ENCODE measurements at regions of chr3 and their contacts with region 1.

Region 1: GRCh38 chr3:128112357-128112968 is 11.1 kb downstream of the RUVBL1 start:
- DNase-seq: peak; percentile 73
- H3K4me3 Mint-ChIP-seq: peak overlapping the region; percentile 46
- H3K27ac Mint-ChIP-seq: peak overlapping the region; percentile 98
- H3K4me1 Mint-ChIP-seq: peaks cover 51% of the 10 kb centered on the region
- H3K27me3 Mint-ChIP-seq: no peaks in the 10 kb centered on the region

Region 2: DNA sequence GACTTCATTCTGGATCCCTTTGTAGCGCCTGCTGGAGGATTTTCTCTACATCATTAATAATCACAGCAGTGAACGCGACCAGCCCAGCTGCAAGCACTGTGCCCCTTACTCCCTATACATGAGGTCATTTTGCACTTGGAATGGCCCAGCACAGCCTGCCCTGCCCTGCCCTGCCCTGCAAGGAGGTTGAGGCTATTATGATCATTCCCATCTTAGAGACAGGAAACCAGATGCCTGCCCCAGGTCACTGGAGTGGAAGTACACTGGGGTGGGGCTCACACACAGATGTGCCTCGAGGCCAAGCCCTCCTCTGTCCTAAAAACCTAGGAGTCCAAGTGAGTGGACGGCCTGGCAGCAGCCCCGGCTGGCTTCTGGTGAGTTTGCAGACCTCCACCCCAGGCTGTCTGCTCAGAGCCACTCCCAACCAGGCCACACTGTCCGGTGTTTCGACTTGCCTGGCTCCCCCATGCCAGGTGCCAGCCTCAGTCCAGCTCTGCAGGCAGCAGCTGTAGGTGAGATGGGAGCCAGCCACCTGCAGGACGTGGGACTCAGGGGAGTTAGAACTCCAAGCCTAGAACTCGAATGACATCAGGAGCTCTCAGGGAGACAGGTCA is 90.6 kb before region 1 on chr3:
- CTCF ChIA-PET with region 1: no interaction called
- POLR2A ChIA-PET with region 1: no interaction called
- DNase-seq: no peak
- H3K4me3 Mint-ChIP-seq: no peak overlapping the region
- H3K27ac Mint-ChIP-seq: no peak overlapping the region
- H3K4me1 Mint-ChIP-seq: no peaks in the 10 kb centered on the region
- H3K27me3 Mint-ChIP-seq: peaks cover 17% of the 10 kb centered on the region

Region 3: DNA sequence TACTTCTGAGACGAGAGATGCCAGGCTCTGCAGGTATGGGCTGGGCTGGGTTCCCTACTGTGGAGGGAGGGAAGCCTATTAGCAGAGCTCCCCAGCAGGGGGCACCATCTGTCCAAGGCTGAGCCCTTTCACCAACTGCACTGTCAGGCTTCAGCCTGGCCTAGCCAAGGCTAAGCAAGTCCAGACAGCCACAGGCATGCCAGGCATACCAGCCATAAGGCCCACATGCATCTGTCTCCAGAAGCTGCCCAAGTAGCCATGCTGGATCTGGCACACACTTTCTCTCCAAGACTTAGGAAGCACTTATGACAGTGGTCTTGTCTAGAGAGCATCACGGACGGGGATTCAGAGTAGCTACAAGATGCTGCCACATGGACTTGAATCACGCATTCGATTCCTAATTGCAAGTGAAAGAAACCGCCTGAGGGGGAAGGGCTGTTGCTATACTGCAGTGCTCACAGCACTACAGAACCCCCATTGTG is 17.2 kb before region 1 on chr3:
- CTCF ChIA-PET with region 1: interaction called, 12 read pairs
- POLR2A ChIA-PET with region 1: interaction called, 4 read pairs
- DNase-seq: peak; percentile 86
- H3K4me3 Mint-ChIP-seq: no peak overlapping the region
- H3K27ac Mint-ChIP-seq: peak overlapping the region; percentile 64
- H3K4me1 Mint-ChIP-seq: peaks cover 27% of the 10 kb centered on the region
- H3K27me3 Mint-ChIP-seq: no peaks in the 10 kb centered on the region

Region 4: GRCh38 chr3:128123538-128124368 is 11.3 kb after region 1 on chr3 and contains the start of gene RUVBL1:
- CTCF ChIA-PET with region 1: interaction called, 11 read pairs
- POLR2A ChIA-PET with region 1: interaction called, 134 read pairs
- DNase-seq: peak; percentile 98
- H3K4me3 Mint-ChIP-seq: peak within 1 kb of the TSS; percentile 97
- H3K27ac Mint-ChIP-seq: peak within 1 kb of the TSS; percentile 86
- H3K4me1 Mint-ChIP-seq: peaks cover 31% of the 10 kb centered on the region
- H3K27me3 Mint-ChIP-seq: no peaks in the 10 kb centered on the region
- total RNA-seq, gene RUVBL1: 56.3 to 62.3 TPM

Region 5: GRCh38 chr3:128133273-128134084 is 21.0 kb after region 1 on chr3:
- CTCF ChIA-PET with region 1: interaction called, 31 read pairs
- POLR2A ChIA-PET with region 1: interaction called, 6 read pairs
- DNase-seq: peak; percentile 56
- H3K4me3 Mint-ChIP-seq: no peak overlapping the region
- H3K27ac Mint-ChIP-seq: no peak overlapping the region
- H3K4me1 Mint-ChIP-seq: no peaks in the 10 kb centered on the region
- H3K27me3 Mint-ChIP-seq: peaks cover 19% of the 10 kb centered on the region

Region 6: DNA sequence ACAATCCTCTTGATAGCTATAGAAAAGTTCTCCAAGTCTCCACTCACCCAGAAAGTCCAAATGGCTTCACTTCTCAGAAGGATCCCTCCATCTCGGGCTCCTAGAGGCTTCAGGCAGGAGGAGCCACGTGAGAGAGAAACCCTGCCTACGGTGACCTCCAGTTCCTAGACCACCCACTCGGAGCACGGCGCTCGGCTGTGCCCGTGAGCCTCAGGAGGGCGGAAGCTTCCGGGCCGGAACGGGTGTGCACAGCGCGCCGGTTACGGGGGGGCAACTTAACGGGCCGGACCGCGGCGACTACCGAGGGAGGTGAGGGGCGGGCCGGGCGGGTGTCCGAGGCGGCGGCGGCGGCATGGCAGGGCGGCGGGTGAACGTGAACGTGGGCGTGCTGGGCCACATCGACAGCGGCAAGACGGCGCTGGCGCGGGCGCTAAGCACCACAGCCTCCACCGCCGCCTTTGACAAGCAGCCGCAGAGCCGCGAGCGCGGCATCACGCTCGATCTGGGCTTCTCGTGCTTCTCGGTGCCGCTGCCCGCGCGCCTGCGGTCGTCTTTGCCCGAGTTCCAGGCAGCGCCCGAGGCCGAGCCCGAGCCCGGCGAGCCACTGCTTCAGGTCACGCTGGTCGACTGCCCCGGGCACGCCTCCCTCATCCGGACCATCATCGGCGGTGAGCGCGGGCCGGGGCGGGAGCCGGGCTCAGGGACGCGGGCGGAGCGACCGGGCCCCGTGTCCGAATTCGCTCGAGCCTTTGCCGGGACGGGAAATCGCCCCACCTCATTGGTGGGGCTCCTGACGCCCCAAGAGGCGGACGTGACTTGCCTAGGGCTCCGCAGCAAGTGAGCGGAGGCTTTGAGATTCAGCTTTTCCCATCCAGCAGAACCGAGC is 40.9 kb after region 1 on chr3 and contains the start of gene EEFSEC:
- CTCF ChIA-PET with region 1: interaction called, 4 read pairs
- POLR2A ChIA-PET with region 1: interaction called, 20 read pairs
- DNase-seq: peak; percentile 86
- H3K4me3 Mint-ChIP-seq: peak within 1 kb of the TSS; percentile 93
- H3K27ac Mint-ChIP-seq: peak within 1 kb of the TSS; percentile 70
- H3K4me1 Mint-ChIP-seq: peaks cover 16% of the 10 kb centered on the region
- H3K27me3 Mint-ChIP-seq: no peaks in the 10 kb centered on the region
- total RNA-seq, gene EEFSEC: 14.5 to 15.0 TPM

Region 7: GRCh38 chr3:128274771-128275211 is 162.3 kb after region 1 on chr3:
- CTCF ChIA-PET with region 1: no interaction called
- POLR2A ChIA-PET with region 1: no interaction called
- DNase-seq: no peak
- H3K4me3 Mint-ChIP-seq: no peak overlapping the region
- H3K27ac Mint-ChIP-seq: no peak overlapping the region
- H3K4me1 Mint-ChIP-seq: no peaks in the 10 kb centered on the region
- H3K27me3 Mint-ChIP-seq: no peaks in the 10 kb centered on the region